Aorta (tissue), 5 donors: ENCODE measurements at regions of chr12 and their contacts with region 1.

Region 1: GRCh38 chr12:65811968-65812700 is 12.1 kb upstream of the HMGA2 start:
- DNase-seq: no peak
- ATAC-seq: no peak
- H3K4me3 ChIP-seq: no peak overlapping the region
- H3K27ac ChIP-seq: no peak overlapping the region
- H3K4me1 ChIP-seq: no peaks in the 10 kb centered on the region
- H3K27me3 ChIP-seq: no peaks in the 10 kb centered on the region

Region 2: GRCh38 chr12:65740873-65741600 is 71.1 kb before region 1 on chr12:
- intact Hi-C with region 1: no loop called
- DNase-seq: peak; percentile 68 to 87
- ATAC-seq: peak; percentile 81
- H3K4me3 ChIP-seq: peak overlapping the region; percentile 36 to 59
- H3K27ac ChIP-seq: no peak overlapping the region
- H3K4me1 ChIP-seq: no peaks in the 10 kb centered on the region
- H3K27me3 ChIP-seq: no peaks in the 10 kb centered on the region

Region 3: DNA sequence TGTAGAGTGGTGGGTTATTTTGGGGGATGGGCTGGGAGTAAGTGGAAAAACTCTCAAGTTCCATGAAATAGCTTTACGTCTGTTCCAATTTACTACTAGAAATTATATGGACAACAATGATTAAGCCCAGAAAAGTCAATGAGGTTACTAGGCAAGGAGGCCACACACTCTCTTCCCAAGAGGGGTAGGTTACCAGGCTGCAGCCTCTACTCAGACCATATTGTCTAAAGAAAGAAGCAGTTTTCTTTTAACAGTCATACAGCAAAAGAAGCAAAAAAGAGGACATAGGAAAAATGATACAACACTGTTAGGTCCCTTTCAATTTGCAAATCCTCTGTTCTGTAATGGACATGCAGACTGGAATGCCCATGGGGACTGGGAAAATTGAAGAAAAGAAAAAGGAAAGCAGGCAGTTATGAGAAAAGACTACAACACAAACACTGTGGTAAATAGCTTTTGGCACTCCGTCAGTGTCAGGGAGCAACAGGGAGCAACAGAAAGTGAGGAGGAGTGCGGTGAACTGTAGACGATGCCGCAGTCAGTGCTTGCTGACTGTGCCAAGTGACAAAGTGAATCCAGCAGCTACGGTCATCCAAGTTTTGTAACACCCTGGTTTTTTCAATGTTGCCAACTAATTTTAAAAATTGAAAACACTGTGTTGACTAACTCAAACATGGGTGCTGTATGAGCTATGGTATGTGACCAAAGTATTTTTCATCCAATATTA is 27.7 kb before region 1 on chr12:
- intact Hi-C with region 1: loop called in 1 of 2 experiments (anchors 2 kb)
- DNase-seq: no peak
- ATAC-seq: no peak
- H3K4me3 ChIP-seq: no peak overlapping the region
- H3K27ac ChIP-seq: no peak overlapping the region
- H3K4me1 ChIP-seq: no peaks in the 10 kb centered on the region
- H3K27me3 ChIP-seq: peaks cover 0 to 3% of the 10 kb centered on the region in 2 donors

Region 4: DNA sequence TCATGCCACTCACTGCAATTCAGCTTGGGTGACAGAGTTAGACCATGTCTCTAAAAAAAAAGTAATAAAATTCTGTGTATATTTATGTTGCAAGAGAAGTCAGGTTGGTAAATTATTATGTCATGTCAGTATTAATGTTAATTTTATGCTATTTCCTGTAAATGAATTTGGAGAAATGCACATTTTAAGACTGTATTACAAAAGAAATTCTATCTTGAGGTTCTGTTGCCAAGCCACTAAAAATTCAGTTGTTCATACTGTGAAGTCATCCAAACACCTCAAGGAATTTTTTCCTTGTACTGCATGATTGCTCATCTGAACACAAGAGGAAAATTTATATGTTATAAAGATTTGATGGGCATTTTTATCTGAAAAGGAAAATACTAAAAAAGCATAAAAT is 11.2 kb before region 1 on chr12:
- intact Hi-C with region 1: no loop called
- DNase-seq: no peak
- ATAC-seq: no peak
- H3K4me3 ChIP-seq: no peak overlapping the region
- H3K27ac ChIP-seq: no peak overlapping the region
- H3K4me1 ChIP-seq: no peaks in the 10 kb centered on the region
- H3K27me3 ChIP-seq: peaks cover 0 to 2% of the 10 kb centered on the region in 2 donors